Activated CD8-positive, alpha-beta T cell treated with anti-CD3 and anti-CD28 coated beads, Interleukin-2, amount 10 ng/mL, durations not matched to agents 7 days and 5 days (primary cell): ENCODE measurements at regions of chr2 and their contacts with region 1.

Region 1: DNA sequence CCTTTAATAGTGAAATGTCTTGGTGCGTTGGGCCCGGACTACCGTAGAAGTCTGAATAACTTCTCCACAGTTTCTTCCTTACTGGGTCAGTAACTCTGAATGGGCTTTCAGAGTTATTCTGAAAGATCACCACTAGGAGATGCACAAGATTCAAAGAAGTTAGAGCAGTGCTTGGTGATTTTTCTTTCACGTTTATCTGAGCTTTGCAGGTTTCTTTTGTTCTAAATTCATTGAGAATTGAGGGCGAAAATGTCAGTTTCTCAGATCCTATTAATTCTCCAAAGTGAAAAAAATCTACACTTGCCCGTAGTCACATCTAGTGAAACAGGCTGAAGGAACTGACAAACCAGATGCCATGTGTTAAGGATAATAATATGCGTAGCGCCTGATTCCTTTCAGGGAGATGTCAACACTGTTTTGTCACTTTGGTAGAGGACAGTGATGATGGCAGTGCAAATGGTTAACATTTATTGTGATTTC is 70.1 kb downstream of the QPCT start:
- DNase-seq: no peak
- ATAC-seq: peak; percentile 64
- H3K4me3 Mint-ChIP-seq: no peak overlapping the region
- H3K27ac Mint-ChIP-seq: no peak overlapping the region
- H3K4me1 Mint-ChIP-seq: peaks cover 4% of the 10 kb centered on the region
- H3K27me3 Mint-ChIP-seq: peaks cover 8% of the 10 kb centered on the region

Region 2: GRCh38 chr2:37529830-37530415 is 115.4 kb after region 1 on chr2:
- CTCF ChIA-PET with region 1: interaction called, 13 read pairs
- POLR2A ChIA-PET with region 1: no interaction called
- DNase-seq: no peak
- ATAC-seq: no peak
- H3K4me3 Mint-ChIP-seq: no peak overlapping the region
- H3K27ac Mint-ChIP-seq: no peak overlapping the region
- H3K4me1 Mint-ChIP-seq: no peaks in the 10 kb centered on the region
- H3K27me3 Mint-ChIP-seq: peaks cover 3% of the 10 kb centered on the region

Region 3: DNA sequence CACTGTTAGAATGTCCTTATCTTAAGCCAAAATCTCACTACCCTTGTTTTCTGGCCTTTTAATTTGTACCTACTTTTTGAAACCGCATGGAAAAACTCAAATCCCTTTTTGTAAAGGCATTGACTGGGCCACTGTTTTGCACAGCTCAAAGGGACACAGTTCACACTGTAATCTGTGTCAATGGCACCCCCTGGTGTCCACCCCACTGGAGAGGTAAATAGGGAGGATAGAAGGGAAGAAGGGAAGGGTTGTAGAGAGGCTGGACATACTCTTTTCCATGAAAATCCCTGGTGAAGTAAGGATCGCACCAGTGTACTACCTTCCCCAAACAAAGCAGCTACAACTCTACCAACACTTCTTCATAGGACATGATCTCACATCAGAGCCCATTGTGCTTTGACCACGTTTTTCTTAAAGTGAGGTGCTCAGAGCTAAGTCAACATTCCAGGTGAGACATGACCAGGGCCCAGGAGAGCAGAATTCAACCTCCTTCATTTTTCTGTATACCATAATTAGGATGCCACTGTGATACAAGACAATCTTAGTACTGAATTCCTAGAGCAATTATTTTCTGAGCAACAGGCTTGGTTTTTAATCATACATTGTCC is 418.2 kb after region 1 on chr2:
- CTCF ChIA-PET with region 1: interaction called, 57 read pairs
- POLR2A ChIA-PET with region 1: no interaction called
- DNase-seq: peak; percentile 86
- ATAC-seq: peak; percentile 91
- H3K4me3 Mint-ChIP-seq: no peak overlapping the region
- H3K27ac Mint-ChIP-seq: no peak overlapping the region
- H3K4me1 Mint-ChIP-seq: peaks cover 17% of the 10 kb centered on the region
- H3K27me3 Mint-ChIP-seq: no peaks in the 10 kb centered on the region